ENCODE measurements at regions of chrX and their contacts with region 1.

Region 1: DNA sequence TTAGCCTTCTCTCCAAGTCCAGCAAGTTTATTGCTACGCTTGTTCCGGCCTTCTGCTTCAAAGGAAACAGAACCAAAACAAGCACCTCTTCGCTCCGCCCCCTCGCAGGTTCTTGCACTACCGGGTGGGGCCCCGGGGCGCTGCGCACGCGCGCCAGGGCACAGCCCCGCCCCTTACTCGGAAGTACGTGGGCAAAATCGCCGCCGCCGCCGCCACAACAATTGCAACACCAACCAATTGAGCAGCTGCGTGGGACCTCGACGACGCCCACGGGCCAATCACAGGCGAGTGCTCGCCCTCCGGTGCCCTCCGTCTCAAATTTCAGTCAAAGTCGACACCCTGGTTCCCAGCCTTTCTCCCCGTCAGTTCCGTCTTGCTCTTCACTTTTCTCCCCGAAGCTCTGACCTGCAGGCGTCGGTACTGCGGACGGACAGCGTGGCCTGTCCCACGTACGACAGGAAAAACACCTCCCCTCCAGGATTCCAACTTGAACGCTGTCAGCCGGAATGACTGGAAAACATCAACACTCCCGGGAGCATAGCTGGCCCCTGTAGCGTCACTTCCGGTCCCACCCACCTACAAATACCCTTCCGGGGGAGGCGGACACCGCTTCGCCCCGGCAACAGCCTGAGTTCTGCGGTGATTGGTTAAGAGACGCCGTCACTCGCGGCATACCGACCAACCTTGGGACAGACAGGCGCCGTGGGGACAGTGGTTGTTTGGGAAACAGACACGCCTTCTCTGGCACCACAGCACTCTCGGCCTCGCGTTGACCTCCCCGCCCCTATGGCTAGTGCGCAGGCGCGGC is 624 bp upstream of the OTUD5 start:
- DNase-seq: peak; percentile 94 to 98 (median 97)
- ATAC-seq: peak; percentile 90 to 93 (median 92)
- H3K4me3 ChIP-seq: peak overlapping the region; percentile 47 to 70 (median 63)
- H3K27ac ChIP-seq: peak overlapping the region; percentile 90 to 95 (median 92)
- H3K4me1 ChIP-seq: peaks cover 0 to 6% (median 0%) of the 10 kb centered on the region in 4 donors
- H3K27me3 ChIP-seq: no peaks in the 10 kb centered on the region
- CTCF ChIP-seq: no peak
- POLR2A ChIP-seq: peak; percentile 59

Region 2: GRCh38 chrX:48904626-48905025 is 53.4 kb before region 1 on chrX:
- intact Hi-C with region 1: loop called in 1 of 2 experiments (anchors 10 kb)
- DNase-seq: no peak
- ATAC-seq: peak in 1 of 4 donors; percentile 10
- H3K4me3 ChIP-seq: no peak overlapping the region
- H3K27ac ChIP-seq: no peak overlapping the region
- H3K4me1 ChIP-seq: peaks cover 0 to 5% (median 0%) of the 10 kb centered on the region in 4 donors
- H3K27me3 ChIP-seq: no peaks in the 10 kb centered on the region
- CTCF ChIP-seq: no peak
- POLR2A ChIP-seq: no peak

Region 3: DNA sequence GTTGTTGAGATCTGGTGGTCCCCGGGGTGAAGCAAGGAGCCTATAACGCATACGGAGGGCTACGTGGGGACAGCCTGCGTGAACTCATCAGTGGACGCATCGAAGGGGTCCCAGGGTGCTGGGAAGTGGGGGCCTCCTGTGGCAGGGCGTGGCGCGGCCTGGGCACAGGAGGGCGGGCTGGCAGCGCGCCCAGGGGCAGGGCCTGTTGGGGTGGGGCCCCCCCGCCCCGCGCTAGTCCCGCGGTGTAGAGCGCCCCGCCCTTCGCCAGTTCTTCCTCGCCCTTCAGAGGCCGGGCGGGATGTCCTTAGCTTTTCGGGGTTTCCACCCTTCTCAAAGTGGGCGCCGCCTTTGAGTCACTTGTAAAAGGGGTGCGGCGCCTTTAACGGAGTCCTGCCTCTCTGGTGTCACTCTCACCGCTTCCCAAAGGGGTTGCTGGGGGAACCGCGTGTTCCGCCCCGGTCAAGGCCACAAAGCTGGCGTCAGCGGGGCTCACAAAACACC is 214.3 kb after region 1 on chrX:
- intact Hi-C with region 1: no loop called
- DNase-seq: peak; percentile 74 to 84 (median 81)
- ATAC-seq: peak; percentile 75 to 78 (median 75)
- H3K4me3 ChIP-seq: peak overlapping the region; percentile 31 to 55 (median 43)
- H3K27ac ChIP-seq: peak overlapping the region; percentile 6 to 62 (median 47)
- H3K4me1 ChIP-seq: peaks cover 0 to 5% (median 0%) of the 10 kb centered on the region in 4 donors
- H3K27me3 ChIP-seq: no peaks in the 10 kb centered on the region
- CTCF ChIP-seq: no peak
- POLR2A ChIP-seq: no peak